CD14-positive monocyte (primary cell): ENCODE measurements at regions of chr12 and their contacts with region 1.

Region 1: GRCh38 chr12:45543906-45544315 is 185.6 kb upstream of the ARID2 start:
- DNase-seq: peak; percentile 59 to 77 (median 74)
- H3K4me3 ChIP-seq: no peak overlapping the region
- H3K4me3 Mint-ChIP-seq: no peak overlapping the region
- H3K27ac ChIP-seq: no peak overlapping the region
- H3K27ac Mint-ChIP-seq: no peak overlapping the region
- H3K4me1 ChIP-seq: peaks cover 6 to 7% of the 10 kb centered on the region in 2 donors
- H3K4me1 Mint-ChIP-seq: peaks cover 14% of the 10 kb centered on the region
- H3K27me3 ChIP-seq: no peaks in the 10 kb centered on the region
- H3K27me3 Mint-ChIP-seq: peaks cover 0 to 2% (median 2%) of the 10 kb centered on the region in 3 donors
- CTCF ChIP-seq: peak; percentile 89

Region 2: GRCh38 chr12:45728630-45729232 is 184.8 kb after region 1 on chr12:
- intact Hi-C with region 1: loop called in 1 of 2 experiments (anchors 10 kb)
- DNase-seq: peak; percentile 90 to 96 (median 93)
- H3K4me3 ChIP-seq: peak overlapping the region; percentile 65 to 98 (median 73)
- H3K4me3 Mint-ChIP-seq: peak overlapping the region; percentile 98 to 99
- H3K27ac ChIP-seq: peak overlapping the region; percentile 98
- H3K27ac Mint-ChIP-seq: peak overlapping the region; percentile 98 to 99 (median 98)
- H3K4me1 ChIP-seq: peaks cover 29 to 58% of the 10 kb centered on the region in 2 donors
- H3K4me1 Mint-ChIP-seq: peaks cover 39% of the 10 kb centered on the region
- H3K27me3 ChIP-seq: no peaks in the 10 kb centered on the region
- H3K27me3 Mint-ChIP-seq: no peaks in the 10 kb centered on the region
- CTCF ChIP-seq: peak; percentile 98

Region 3: GRCh38 chr12:45745861-45746277 is 202.0 kb after region 1 on chr12:
- intact Hi-C with region 1: loop called in 1 of 2 experiments (anchors 10 kb)
- DNase-seq: peak in 1 of 3 donors; percentile 34
- H3K4me3 ChIP-seq: no peak overlapping the region
- H3K4me3 Mint-ChIP-seq: no peak overlapping the region
- H3K27ac ChIP-seq: no peak overlapping the region
- H3K27ac Mint-ChIP-seq: peak overlapping the region in 4 of 7 donors; percentile 27 to 81 (median 53)
- H3K4me1 ChIP-seq: no peaks in the 10 kb centered on the region
- H3K4me1 Mint-ChIP-seq: peaks cover 8% of the 10 kb centered on the region
- H3K27me3 ChIP-seq: no peaks in the 10 kb centered on the region
- H3K27me3 Mint-ChIP-seq: no peaks in the 10 kb centered on the region
- CTCF ChIP-seq: peak; percentile 56

Region 4: GRCh38 chr12:45789025-45789424 is 245.1 kb after region 1 on chr12:
- intact Hi-C with region 1: no loop called
- DNase-seq: no peak
- H3K4me3 ChIP-seq: no peak overlapping the region
- H3K4me3 Mint-ChIP-seq: no peak overlapping the region
- H3K27ac ChIP-seq: no peak overlapping the region
- H3K27ac Mint-ChIP-seq: peak overlapping the region in 1 of 7 donors; percentile 48
- H3K4me1 ChIP-seq: no peaks in the 10 kb centered on the region
- H3K4me1 Mint-ChIP-seq: peaks cover 4% of the 10 kb centered on the region
- H3K27me3 ChIP-seq: no peaks in the 10 kb centered on the region
- H3K27me3 Mint-ChIP-seq: no peaks in the 10 kb centered on the region
- CTCF ChIP-seq: no peak